WTC11 (cell line): ENCODE measurements at regions of chr4 and their contacts with region 1.

Region 1: GRCh38 chr4:2552806-2553205 is 16.4 kb downstream of the FAM193A start:
- DNase-seq: no peak
- ATAC-seq: no peak
- H3K4me3 Mint-ChIP-seq: no peak overlapping the region
- H3K27ac Mint-ChIP-seq: no peak overlapping the region
- H3K4me1 Mint-ChIP-seq: 0 out of 2 replicates have a peak, but pooled peaks cover 4% of the 10 kb centered on the region
- H3K27me3 Mint-ChIP-seq: no peaks in the 10 kb centered on the region
- CTCF ChIP-seq: no peak

Region 2: GRCh38 chr4:2570551-2571222 is 17.9 kb after region 1 on chr4:
- CTCF ChIA-PET with region 1: no interaction called
- POLR2A ChIA-PET with region 1: no interaction called
- DNase-seq: no peak
- ATAC-seq: peak; percentile 67
- H3K4me3 Mint-ChIP-seq: no peak overlapping the region
- H3K27ac Mint-ChIP-seq: peak overlapping the region; percentile 90
- H3K4me1 Mint-ChIP-seq: peaks cover 39% of the 10 kb centered on the region
- H3K27me3 Mint-ChIP-seq: no peaks in the 10 kb centered on the region
- CTCF ChIP-seq: no peak

Region 3: DNA sequence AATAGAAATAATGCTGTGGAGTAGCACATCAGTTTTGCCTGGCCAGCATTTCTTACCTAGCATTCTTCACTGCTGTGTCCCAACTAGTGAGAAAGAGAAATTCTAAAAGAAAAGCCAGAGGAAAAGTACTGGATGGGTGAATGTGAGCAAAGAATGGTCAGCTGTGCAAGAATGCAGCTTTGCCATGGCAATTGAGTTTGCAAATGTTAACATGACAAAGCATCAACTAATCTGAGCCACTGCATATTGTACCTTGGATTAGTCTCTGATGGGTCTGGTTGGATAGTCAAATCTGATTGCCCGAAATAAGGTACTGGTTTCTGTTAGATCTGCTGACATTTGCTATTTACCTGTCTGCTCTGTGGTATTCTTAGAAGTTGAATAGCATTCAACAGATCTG is 329.5 kb after region 1 on chr4:
- CTCF ChIA-PET with region 1: no interaction called
- POLR2A ChIA-PET with region 1: interaction called, 11 read pairs
- DNase-seq: no peak
- ATAC-seq: peak; percentile 70
- H3K4me3 Mint-ChIP-seq: no peak overlapping the region
- H3K27ac Mint-ChIP-seq: peak overlapping the region; percentile 91
- H3K4me1 Mint-ChIP-seq: peaks cover 21% of the 10 kb centered on the region
- H3K27me3 Mint-ChIP-seq: no peaks in the 10 kb centered on the region
- CTCF ChIP-seq: no peak